Caco-2 (cell line): ENCODE measurements at regions of chr15 and their contacts with region 1.

Region 1: GRCh38 chr15:41180206-41180789 is 50.3 kb downstream of the EXD1 start:
- DNase-seq: no peak
- H3K4me3 ChIP-seq: no peak overlapping the region
- H3K4me3 Mint-ChIP-seq: no peak overlapping the region
- H3K27ac Mint-ChIP-seq: no peak overlapping the region
- H3K4me1 ChIP-seq: no peaks in the 10 kb centered on the region
- H3K4me1 Mint-ChIP-seq: no peaks in the 10 kb centered on the region
- H3K27me3 ChIP-seq: no peaks in the 10 kb centered on the region
- H3K27me3 Mint-ChIP-seq: no peaks in the 10 kb centered on the region
- CTCF ChIP-seq: no peak

Region 2: GRCh38 chr15:41096178-41096577 is 84.1 kb before region 1 on chr15:
- CTCF ChIA-PET with region 1: no interaction called
- POLR2A ChIA-PET with region 1: no interaction called
- intact Hi-C with region 1: no loop called
- DNase-seq: no peak
- H3K4me3 ChIP-seq: no peak overlapping the region
- H3K4me3 Mint-ChIP-seq: no peak overlapping the region
- H3K27ac Mint-ChIP-seq: no peak overlapping the region
- H3K4me1 ChIP-seq: no peaks in the 10 kb centered on the region
- H3K4me1 Mint-ChIP-seq: no peaks in the 10 kb centered on the region
- H3K27me3 ChIP-seq: no peaks in the 10 kb centered on the region
- H3K27me3 Mint-ChIP-seq: no peaks in the 10 kb centered on the region
- CTCF ChIP-seq: no peak

Region 3: DNA sequence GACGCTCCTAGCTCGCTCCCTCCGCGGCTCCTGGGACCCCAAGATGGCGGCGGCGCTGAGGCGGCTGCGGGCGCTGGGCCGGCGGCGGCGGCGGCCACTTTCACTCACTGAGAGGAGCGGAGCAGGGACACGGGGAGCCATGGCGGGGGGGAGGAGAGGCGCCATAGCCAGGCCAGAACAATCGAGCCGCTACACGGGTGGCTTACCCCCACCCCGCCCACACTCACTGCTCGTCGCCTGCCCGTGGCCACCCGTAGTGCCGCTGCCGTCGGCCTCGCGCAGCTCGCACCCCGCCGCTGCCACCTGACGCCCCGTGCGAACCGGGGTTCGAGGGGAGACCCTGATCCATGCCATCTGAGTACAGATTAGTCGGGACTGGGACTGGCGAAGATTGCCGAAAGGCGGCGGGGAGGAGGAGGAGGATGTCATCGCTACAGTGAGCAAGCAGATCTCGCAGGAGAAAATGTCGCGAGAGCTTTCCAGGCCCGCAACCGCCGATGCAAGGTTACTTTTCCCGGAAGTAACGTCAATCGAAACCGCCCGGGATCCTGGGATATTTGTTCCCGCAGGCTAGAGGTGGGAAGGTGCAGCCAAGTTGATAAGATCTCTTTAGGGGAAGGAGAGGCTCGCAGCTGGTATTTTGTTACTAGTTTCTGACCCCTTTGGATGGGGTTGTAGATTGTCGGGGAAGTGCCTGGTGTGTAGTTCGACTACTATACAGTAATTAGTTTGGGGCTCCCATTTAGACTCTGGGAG is 64.0 kb before region 1 on chr15 and contains the start of gene INO80:
- CTCF ChIA-PET with region 1: no interaction called
- POLR2A ChIA-PET with region 1: no interaction called
- intact Hi-C with region 1: loop called (anchors 2 kb)
- DNase-seq: peak; percentile 97 to 99
- H3K4me3 ChIP-seq: peak within 1 kb of the TSS; percentile 99
- H3K4me3 Mint-ChIP-seq: peak within 1 kb of the TSS; percentile 89
- H3K27ac Mint-ChIP-seq: peak within 1 kb of the TSS; percentile 100
- H3K4me1 ChIP-seq: no peaks in the 10 kb centered on the region
- H3K4me1 Mint-ChIP-seq: no peaks in the 10 kb centered on the region
- H3K27me3 ChIP-seq: no peaks in the 10 kb centered on the region
- H3K27me3 Mint-ChIP-seq: no peaks in the 10 kb centered on the region
- CTCF ChIP-seq: no peak
- total RNA-seq, gene INO80: 24.4 and 25.3 TPM in 2 replicates

Region 4: DNA sequence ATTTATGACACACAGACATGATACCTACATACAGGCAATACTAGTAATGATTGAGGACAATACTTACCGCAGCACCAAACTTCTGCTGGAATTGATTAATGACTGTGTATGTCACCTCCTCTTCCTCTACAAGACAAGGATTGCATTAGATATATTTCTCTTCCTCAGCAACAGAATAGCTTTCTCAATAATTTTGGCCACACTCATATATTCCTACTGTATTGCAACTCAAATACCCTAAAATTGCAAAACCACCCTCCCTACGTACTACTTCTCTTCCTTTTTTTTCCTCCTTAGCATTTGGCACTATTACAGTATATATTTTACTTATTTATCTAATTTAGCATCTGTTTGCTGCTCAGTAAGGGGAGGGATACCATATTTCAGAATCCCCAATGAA is 35.4 kb after region 1 on chr15:
- CTCF ChIA-PET with region 1: no interaction called
- POLR2A ChIA-PET with region 1: no interaction called
- intact Hi-C with region 1: no loop called
- DNase-seq: no peak
- H3K4me3 ChIP-seq: no peak overlapping the region
- H3K4me3 Mint-ChIP-seq: no peak overlapping the region
- H3K27ac Mint-ChIP-seq: no peak overlapping the region
- H3K4me1 ChIP-seq: no peaks in the 10 kb centered on the region
- H3K4me1 Mint-ChIP-seq: no peaks in the 10 kb centered on the region
- H3K27me3 ChIP-seq: no peaks in the 10 kb centered on the region
- H3K27me3 Mint-ChIP-seq: peaks cover 2% of the 10 kb centered on the region
- CTCF ChIP-seq: no peak